H1 (cell line): ENCODE measurements at regions of chr15 and their contacts with region 1.

Region 1: DNA sequence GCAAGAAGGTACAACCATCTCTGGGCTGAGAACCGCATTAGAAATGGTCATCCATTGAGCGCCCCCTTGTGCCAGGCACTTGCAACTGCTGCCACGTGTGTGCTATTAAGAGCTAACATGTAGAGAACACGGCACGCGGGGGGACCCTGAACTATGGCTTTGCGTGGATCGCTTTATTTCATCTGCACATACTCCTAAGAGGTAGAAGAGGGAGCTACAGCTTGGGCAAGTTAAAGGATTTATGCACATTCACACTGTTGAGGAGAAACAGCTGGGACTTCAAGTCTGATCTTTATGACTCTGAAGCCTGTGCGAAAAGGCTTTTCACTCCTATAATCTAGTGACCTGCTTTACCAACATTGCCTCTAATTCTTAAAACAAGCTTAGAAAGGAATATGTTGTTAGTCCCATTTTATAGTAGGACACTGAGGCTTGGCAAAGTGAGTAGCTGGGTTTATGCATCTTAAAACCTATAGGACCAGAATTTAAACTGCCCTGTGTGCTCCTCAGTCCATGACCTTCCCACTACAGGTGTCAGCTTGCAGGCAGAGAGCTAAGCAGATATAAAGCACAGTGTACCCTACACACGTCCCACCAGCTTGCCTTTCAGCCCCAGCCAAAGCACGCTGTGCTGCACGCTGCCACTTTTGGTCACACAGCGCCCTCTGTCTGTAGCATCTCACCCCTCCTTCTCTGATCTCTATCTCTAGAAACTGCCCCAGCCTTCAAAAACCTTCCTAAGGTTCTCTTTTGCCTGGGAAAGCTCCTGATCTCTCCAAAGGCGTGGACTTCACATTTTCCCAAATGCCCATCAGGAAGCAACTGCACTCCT is 57.8 kb downstream of the STARD5 start:
- DNase-seq: peak; percentile 70 to 93
- H3K4me3 ChIP-seq: peak overlapping the region in 3 of 4 experiments; percentile 7 to 51 (median 16); a peak in 3 of 8 replicates
- H3K27ac ChIP-seq: no peak overlapping the region
- H3K4me1 ChIP-seq: peaks cover 0 to 5% (median 1%) of the 10 kb centered on the region in 4 experiments; a peak in 2 of 7 replicates
- H3K27me3 ChIP-seq: peaks cover 0 to 2% (median 0%) of the 10 kb centered on the region in 4 experiments; a peak in 2 of 7 replicates
- CTCF ChIP-seq: peak; percentile 92 to 98 (median 94)
- EP300 ChIP-seq: no peak
- POLR2A ChIP-seq: no peak
- RAD21 ChIP-seq: peak; percentile 94 to 95

Region 2: GRCh38 chr15:81098861-81099651 is 167.1 kb before region 1 on chr15:
- CTCF ChIA-PET with region 1: interaction called, 262 read pairs
- POLR2A ChIA-PET with region 1: interaction called, 3 read pairs
- DNase-seq: peak in 1 of 2 experiments; percentile 38
- H3K4me3 ChIP-seq: no peak overlapping the region
- H3K27ac ChIP-seq: no peak overlapping the region
- H3K4me1 ChIP-seq: no peaks in the 10 kb centered on the region
- H3K27me3 ChIP-seq: no peaks in the 10 kb centered on the region
- CTCF ChIP-seq: no peak
- EP300 ChIP-seq: no peak
- POLR2A ChIP-seq: no peak
- RAD21 ChIP-seq: no peak

Region 3: DNA sequence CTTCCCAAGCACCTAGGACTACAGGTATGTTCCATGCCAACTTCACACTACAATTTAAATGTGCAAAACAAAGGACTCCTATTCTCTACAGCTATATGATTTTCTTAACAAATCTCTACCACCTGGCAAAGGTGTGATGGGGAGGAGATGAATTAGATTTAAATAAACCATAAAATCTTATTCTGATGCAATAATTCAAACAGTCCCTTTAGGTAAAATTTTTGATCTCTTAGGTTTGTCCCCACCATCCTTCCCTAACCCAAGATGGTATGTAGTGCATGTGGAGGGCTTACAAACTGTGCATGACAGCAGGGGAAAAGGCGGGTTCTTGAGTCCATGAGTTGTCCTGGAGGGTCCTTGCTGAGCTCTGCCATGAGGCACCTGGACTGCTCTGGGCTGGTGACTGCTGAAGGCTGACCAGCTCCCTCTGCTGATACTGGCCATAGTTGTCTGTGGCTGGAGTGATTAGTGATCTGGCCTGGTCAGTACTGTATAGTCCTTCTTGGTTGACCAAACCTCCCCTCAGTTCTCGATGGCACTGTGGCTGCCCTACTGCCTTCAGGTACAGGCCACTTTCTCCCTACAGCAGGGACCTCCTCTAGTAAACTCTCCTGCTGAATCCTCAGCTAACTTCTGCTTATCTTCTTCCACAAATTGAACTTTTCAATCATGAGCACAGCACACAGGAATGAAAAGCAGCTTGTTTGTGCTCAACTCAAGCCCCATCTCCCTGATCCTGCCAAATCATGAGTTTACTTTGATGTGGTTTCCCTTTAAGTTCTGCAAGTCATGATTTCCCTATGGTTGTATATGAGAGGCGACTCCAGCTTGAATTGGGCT is 102.0 kb before region 1 on chr15:
- CTCF ChIA-PET with region 1: interaction called, 162 read pairs
- POLR2A ChIA-PET with region 1: no interaction called
- DNase-seq: no peak
- H3K4me3 ChIP-seq: no peak overlapping the region
- H3K27ac ChIP-seq: no peak overlapping the region
- H3K4me1 ChIP-seq: no peaks in the 10 kb centered on the region
- H3K27me3 ChIP-seq: no peaks in the 10 kb centered on the region
- CTCF ChIP-seq: peak; percentile 19 to 25 (median 25); a peak in 2 of 4 replicates
- EP300 ChIP-seq: no peak
- POLR2A ChIP-seq: no peak
- RAD21 ChIP-seq: peak; percentile 27 to 42; a peak in 3 of 4 replicates

Region 4: DNA sequence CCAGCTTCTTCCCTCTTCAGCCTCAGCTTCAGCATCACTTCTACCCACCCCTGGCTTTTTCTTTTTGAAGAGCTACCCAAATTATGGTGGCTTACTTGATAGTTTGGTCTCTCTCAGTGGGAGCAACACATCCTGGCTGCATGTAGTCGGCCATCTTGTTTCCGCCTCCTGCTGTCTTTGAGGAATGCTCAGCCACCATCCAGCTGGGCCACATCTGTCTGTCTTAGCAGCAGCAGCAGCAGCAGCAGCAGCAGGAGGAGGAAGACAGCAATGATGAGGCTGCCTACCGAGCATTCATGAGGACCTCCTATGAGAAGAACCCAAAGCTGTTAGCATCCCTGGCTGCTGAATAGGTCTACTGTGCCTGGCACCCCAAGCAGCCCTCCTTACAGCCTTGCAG is 49.7 kb before region 1 on chr15:
- CTCF ChIA-PET with region 1: interaction called, 41 read pairs
- POLR2A ChIA-PET with region 1: no interaction called
- DNase-seq: no peak
- H3K4me3 ChIP-seq: no peak overlapping the region
- H3K27ac ChIP-seq: no peak overlapping the region
- H3K4me1 ChIP-seq: peaks cover 0 to 2% (median 0%) of the 10 kb centered on the region in 4 experiments; a peak in 1 of 7 replicates
- H3K27me3 ChIP-seq: no peaks in the 10 kb centered on the region
- CTCF ChIP-seq: no peak
- EP300 ChIP-seq: no peak
- POLR2A ChIP-seq: no peak
- RAD21 ChIP-seq: no peak

Region 5: DNA sequence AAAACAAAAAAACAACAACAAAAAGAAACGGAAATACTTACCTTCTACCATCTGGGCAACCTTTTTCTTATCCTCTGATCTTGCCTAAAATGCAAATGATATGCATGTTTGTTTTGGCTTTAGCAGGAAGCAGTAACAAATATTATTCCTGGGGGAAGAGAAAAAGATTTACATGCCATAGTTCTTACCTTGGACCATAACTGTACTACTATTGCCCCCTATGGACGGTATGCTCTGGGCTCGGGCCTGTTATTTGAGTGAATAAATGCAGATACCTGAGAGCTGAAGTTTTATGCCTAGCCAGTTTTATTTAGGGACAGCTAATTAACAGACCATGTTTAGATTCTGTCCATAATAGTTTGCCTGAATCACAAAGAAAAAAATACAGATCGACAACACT is 70.4 kb after region 1 on chr15:
- CTCF ChIA-PET with region 1: interaction called, 14 read pairs
- POLR2A ChIA-PET with region 1: no interaction called
- DNase-seq: peak in 1 of 2 experiments; percentile 32
- H3K4me3 ChIP-seq: no peak overlapping the region
- H3K27ac ChIP-seq: no peak overlapping the region
- H3K4me1 ChIP-seq: peaks cover 0 to 2% (median 0%) of the 10 kb centered on the region in 4 experiments; a peak in 1 of 7 replicates
- H3K27me3 ChIP-seq: no peaks in the 10 kb centered on the region
- CTCF ChIP-seq: peak in 1 of 3 experiments; percentile 18; a peak in 1 of 4 replicates
- EP300 ChIP-seq: no peak
- POLR2A ChIP-seq: no peak
- RAD21 ChIP-seq: peak in 1 of 2 experiments; percentile 35; a peak in 1 of 4 replicates

Region 6: GRCh38 chr15:81400640-81401236 is 134.6 kb after region 1 on chr15:
- CTCF ChIA-PET with region 1: interaction called, 94 read pairs
- POLR2A ChIA-PET with region 1: no interaction called
- DNase-seq: no peak
- H3K4me3 ChIP-seq: no peak overlapping the region
- H3K27ac ChIP-seq: no peak overlapping the region
- H3K4me1 ChIP-seq: no peaks in the 10 kb centered on the region
- H3K27me3 ChIP-seq: no peaks in the 10 kb centered on the region
- CTCF ChIP-seq: peak in 2 of 3 experiments; percentile 70 to 77; a peak in 3 of 4 replicates
- EP300 ChIP-seq: no peak
- POLR2A ChIP-seq: no peak
- RAD21 ChIP-seq: peak; percentile 88 to 92